ENCODE measurements at regions of chr2 and their contacts with region 1.

Region 1: GRCh38 chr2:191539068-191539467 is 138.9 kb upstream of the NABP1 start:
- DNase-seq: no peak
- H3K4me3 ChIP-seq: no peak overlapping the region
- H3K27ac ChIP-seq: no peak overlapping the region
- H3K27me3 ChIP-seq: peaks cover 4% of the 10 kb centered on the region
- CTCF ChIP-seq: peak; percentile 76

Region 2: GRCh38 chr2:191555092-191555742 is 16.1 kb after region 1 on chr2:
- CTCF ChIA-PET with region 1: interaction called, 40 read pairs
- POLR2A ChIA-PET with region 1: no interaction called
- DNase-seq: peak; percentile 61
- H3K4me3 ChIP-seq: no peak overlapping the region
- H3K27ac ChIP-seq: no peak overlapping the region
- H3K27me3 ChIP-seq: peaks cover 3% of the 10 kb centered on the region
- CTCF ChIP-seq: peak; percentile 76